Activated CD4-positive, alpha-beta T cell treated with anti-CD3 and anti-CD28 coated beads for 36 hours (primary cell): ENCODE measurements at regions of chr15 and their contacts with region 1.

Region 1: DNA sequence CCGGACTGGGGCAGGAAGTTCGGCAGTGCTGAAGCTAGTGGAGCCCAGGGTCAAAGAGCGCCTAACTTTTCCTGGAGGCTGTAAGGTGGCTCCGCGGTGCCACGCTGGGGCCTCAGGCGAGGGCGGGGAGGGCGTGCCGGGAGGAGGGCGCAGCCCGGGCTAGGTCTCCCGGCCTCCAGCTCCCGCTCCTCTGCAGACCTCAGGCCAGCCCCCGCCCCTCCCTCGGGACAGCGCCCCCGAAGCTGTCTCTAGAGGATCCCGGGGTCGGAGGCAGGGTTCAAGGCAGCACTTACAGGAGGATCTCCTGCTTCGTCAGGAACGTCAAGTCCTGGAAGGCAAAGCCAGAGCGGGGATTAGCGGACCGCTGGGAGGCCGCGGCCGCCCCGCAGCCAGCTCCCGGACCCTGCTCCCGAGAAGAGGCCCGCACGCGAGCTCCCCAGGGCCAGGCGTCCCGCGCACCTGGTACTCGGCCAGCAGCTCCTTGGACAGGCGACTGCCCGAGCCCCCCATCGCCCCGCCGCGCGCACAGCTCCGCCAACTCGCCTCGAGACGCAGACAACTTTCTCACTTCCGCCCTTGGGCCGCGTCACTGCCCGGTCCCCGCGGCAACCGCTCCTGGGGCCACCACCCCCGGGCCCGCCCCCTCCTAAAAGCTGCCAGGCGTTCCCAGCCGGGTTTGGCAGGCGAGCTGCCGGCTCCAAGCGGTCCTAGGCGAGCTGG is at the start of gene CIB1:
- DNase-seq: peak; percentile 99
- ATAC-seq: peak; percentile 82
- H3K4me3 Mint-ChIP-seq: peak within 1 kb of the TSS; percentile 99
- H3K27ac Mint-ChIP-seq: peak within 1 kb of the TSS; percentile 97
- H3K4me1 Mint-ChIP-seq: peaks cover 46% of the 10 kb centered on the region
- H3K27me3 Mint-ChIP-seq: no peaks in the 10 kb centered on the region
- total RNA-seq, gene CIB1: 135 to 140 TPM

Region 2: DNA sequence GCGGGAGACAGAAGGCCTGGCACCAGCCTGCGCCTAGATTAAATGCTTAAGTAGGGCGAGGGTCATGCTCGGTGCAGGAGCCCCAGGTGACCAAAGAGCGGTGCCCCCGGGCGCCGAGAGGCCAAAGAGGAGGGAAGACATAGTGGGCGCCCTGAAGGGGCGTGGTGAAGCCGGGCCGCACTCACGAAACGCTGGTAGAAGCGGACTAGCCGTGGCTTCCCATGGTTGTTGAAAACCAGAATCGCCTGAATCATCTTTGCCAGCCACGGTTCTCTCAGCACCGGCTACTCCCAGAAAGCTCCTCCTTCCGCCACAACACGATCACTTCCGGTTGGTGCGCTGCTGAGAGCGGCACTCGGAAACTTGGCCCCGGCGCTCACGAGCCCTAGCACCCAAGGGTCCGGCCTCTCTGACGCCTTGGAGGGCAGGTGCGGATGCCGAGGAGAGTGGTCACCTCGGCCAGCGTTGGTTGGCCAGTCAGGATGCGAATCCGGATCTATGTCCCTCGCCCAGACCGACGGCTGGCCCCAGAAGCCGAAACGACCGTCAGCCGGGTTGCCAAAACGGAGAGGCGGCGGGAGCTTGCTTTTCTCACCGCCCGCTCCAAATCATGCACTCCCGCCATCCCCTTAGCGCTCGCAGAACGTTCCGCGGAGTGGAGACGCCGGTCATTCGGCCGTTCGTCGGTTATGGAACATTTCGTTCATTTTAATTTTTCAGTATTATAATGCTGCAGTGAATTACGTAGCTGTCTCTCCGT is 339.7 kb before region 1 on chr15 and contains the start of gene AP3S2:
- CTCF ChIA-PET with region 1: no interaction called
- POLR2A ChIA-PET with region 1: interaction called, 4 read pairs
- intact Hi-C with region 1: loop called in 1 of 2 experiments (anchors 1 kb)
- DNase-seq: peak; percentile 96
- ATAC-seq: peak; percentile 82
- H3K4me3 Mint-ChIP-seq: peak within 1 kb of the TSS; percentile 98
- H3K27ac Mint-ChIP-seq: peak within 1 kb of the TSS; percentile 97
- H3K4me1 Mint-ChIP-seq: peaks cover 43% of the 10 kb centered on the region
- H3K27me3 Mint-ChIP-seq: no peaks in the 10 kb centered on the region
- total RNA-seq, gene AP3S2: 12.4 to 15.3 TPM

Region 3: DNA sequence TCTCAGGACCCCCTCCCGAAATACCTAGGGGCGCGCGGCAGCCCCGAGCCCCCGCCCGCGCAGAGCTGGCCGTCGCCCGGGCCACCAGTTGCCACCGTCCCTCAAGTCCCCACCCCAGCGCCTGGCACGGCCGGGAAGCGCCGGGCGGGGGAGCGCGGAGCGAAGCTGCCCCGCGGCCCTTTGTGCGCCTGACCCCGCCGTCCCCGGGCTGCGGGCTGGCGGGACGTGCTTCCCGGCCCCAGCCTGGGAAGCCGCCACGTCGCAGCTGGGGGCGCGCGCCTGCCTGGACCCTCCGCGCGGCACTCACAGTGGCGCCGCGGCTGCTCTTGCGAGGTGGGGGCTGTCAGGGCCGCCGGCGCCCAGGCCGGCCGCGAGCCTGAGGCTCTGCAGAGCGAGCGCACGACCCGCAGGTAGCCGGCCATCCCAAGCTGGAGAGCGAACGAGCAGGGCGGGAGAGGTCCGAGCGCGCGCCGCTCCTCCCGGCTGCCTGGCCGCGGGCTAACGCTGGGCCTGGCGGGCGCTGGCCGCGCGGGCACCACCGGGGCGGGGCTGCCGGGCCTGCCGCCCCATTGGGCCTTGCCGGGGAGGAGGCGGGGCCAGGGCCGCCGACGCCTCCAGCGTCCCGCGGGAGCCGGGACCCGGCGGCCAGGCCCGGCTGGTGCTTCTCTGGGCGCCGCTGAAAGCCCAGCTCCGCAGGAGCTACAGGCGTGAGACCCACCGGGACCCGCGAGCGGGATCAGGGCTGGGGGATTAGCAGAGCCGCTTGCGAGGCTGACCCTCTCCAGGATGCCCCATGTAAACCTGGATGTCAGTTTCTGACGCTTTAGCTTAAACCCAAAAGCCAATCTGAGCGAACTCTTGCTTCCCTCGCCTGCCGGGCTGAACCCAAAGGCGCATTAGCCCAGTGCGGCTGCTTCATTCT is 131.3 kb before region 1 on chr15 and contains the start of gene IDH2:
- CTCF ChIA-PET with region 1: interaction called, 3 read pairs
- POLR2A ChIA-PET with region 1: no interaction called
- intact Hi-C with region 1: loop called (anchors 1 to 5 kb)
- DNase-seq: peak; percentile 85
- ATAC-seq: peak; percentile 73
- H3K4me3 Mint-ChIP-seq: peak within 1 kb of the TSS; percentile 86
- H3K27ac Mint-ChIP-seq: peak within 1 kb of the TSS; percentile 90
- H3K4me1 Mint-ChIP-seq: peaks cover 47% of the 10 kb centered on the region
- H3K27me3 Mint-ChIP-seq: no peaks in the 10 kb centered on the region
- total RNA-seq, gene IDH2: 176 to 182 TPM

Region 4: DNA sequence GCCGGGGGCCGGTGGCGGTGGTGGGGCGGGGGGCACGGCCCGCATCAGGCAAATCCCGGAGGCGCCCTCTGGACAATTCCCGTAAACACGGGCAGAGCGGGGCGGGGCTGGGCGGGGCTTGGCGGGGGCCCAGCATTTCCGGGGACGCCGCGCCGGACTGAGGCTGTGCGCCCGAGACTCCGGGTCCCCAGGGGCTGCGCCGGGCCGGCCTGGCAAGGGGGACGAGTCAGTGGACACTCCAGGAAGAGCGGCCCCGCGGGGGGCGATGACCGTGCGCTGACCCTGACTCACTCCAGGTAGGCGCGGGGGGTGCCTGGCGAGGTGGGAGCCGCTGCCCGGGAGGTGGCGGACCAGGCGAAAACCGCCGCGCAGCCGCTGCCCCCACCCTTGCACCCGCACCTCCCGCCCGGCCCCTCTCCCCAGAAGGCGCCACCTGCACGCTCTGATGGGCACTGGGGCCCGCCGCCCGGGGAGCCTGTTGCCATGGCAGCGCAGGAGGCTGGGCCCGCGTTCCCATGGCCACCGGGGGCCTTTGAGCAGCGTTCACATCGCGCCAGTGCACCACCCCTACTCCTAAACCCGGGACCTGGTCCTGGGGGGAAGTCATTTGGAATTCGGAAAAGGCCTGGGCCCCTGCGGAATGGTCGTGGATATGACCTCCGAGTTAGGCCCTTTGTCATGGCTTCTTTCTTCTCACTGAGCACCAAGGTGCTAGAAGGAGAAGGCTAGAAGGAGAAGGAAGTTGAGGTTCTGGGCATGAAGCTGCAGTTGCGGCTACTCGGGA is 48.6 kb before region 1 on chr15:
- CTCF ChIA-PET with region 1: interaction called, 4 read pairs
- POLR2A ChIA-PET with region 1: no interaction called
- intact Hi-C with region 1: loop called in 1 of 2 experiments (anchors 1 kb)
- DNase-seq: peak; percentile 78
- ATAC-seq: peak; percentile 81
- H3K4me3 Mint-ChIP-seq: peak overlapping the region; percentile 77
- H3K27ac Mint-ChIP-seq: peak overlapping the region; percentile 64
- H3K4me1 Mint-ChIP-seq: peaks cover 12% of the 10 kb centered on the region
- H3K27me3 Mint-ChIP-seq: no peaks in the 10 kb centered on the region

Region 5: GRCh38 chr15:90249203-90249863 is 15.8 kb after region 1 on chr15 and contains the start of gene TTLL13:
- CTCF ChIA-PET with region 1: interaction called, 8 read pairs
- POLR2A ChIA-PET with region 1: interaction called, 4 read pairs
- intact Hi-C with region 1: loop called in 1 of 2 experiments (anchors 1 kb)
- DNase-seq: peak; percentile 89
- ATAC-seq: peak; percentile 92
- H3K4me3 Mint-ChIP-seq: peak within 1 kb of the TSS; percentile 45
- H3K27ac Mint-ChIP-seq: no peak within 1 kb of the TSS
- H3K4me1 Mint-ChIP-seq: peaks cover 14% of the 10 kb centered on the region
- H3K27me3 Mint-ChIP-seq: no peaks in the 10 kb centered on the region
- total RNA-seq, gene TTLL13: 0.39 to 0.46 TPM

Region 6: GRCh38 chr15:90400406-90401314 is 167.1 kb after region 1 on chr15:
- CTCF ChIA-PET with region 1: no interaction called
- POLR2A ChIA-PET with region 1: no interaction called
- intact Hi-C with region 1: loop called in 1 of 2 experiments (anchors 5 kb)
- DNase-seq: peak; percentile 73
- ATAC-seq: peak; percentile 99
- H3K4me3 Mint-ChIP-seq: peak overlapping the region; percentile 59
- H3K27ac Mint-ChIP-seq: peak overlapping the region; percentile 95
- H3K4me1 Mint-ChIP-seq: peaks cover 69% of the 10 kb centered on the region
- H3K27me3 Mint-ChIP-seq: no peaks in the 10 kb centered on the region

Region 7: GRCh38 chr15:91824256-91824655 is 1590.7 kb after region 1 on chr15:
- CTCF ChIA-PET with region 1: no interaction called
- POLR2A ChIA-PET with region 1: no interaction called
- intact Hi-C with region 1: no loop called
- DNase-seq: no peak
- ATAC-seq: no peak
- H3K4me3 Mint-ChIP-seq: no peak overlapping the region
- H3K27ac Mint-ChIP-seq: no peak overlapping the region
- H3K4me1 Mint-ChIP-seq: no peaks in the 10 kb centered on the region
- H3K27me3 Mint-ChIP-seq: peaks cover 5% of the 10 kb centered on the region